GM10248 (cell line): ENCODE measurements at regions of chr19 and their contacts with region 1.

Region 1: DNA sequence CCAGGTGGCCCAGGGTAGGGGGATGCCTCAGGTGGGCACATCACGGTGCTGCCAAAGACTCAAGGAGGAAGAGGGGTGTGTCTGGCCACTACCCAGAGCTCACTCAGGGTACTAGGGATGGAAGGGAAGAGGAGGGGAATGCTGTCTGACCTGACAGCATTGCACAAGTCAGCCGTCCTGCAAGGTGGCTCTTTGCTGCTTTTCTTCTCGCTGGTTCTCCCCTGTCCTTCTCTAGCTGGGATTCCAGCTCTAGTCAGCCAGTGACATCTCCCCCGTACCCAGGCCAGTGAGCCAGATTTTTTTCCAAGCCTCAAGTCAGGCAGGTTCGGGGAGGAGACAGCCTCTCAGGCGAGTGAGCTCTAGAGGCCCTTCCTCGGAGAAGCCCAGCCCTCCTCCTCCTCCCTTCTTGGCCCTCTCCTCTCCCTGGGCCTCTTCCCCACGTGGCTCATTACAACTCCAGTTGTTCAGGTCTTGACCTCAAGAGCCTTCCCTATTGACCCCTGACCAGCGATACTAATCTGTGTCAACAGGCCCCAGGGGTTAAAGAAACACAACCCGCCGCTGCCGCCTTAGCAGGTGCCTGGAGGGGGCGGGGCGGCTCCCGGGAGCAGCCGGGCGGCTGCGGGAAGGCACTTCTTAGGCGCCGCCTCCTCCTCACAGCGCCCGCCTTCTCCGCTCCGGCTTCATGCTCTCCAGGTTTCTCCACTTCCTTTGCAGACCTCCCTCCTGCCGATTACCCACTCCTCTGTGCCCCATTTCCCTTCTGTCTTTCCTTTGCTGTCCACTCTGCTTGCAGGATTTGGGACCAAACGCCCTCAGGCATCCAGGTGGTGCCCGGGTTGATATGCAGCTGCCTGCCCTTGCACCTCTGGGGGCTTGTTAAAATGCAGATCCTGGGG is 51.1 kb downstream of the LYL1 start:
- DNase-seq: peak; percentile 40
- CTCF ChIP-seq: no peak

Region 2: GRCh38 chr19:12859546-12859945 is 192.0 kb before region 1 on chr19:
- CTCF ChIA-PET with region 1: no interaction called
- POLR2A ChIA-PET with region 1: no interaction called
- DNase-seq: no peak
- CTCF ChIP-seq: no peak

Region 3: DNA sequence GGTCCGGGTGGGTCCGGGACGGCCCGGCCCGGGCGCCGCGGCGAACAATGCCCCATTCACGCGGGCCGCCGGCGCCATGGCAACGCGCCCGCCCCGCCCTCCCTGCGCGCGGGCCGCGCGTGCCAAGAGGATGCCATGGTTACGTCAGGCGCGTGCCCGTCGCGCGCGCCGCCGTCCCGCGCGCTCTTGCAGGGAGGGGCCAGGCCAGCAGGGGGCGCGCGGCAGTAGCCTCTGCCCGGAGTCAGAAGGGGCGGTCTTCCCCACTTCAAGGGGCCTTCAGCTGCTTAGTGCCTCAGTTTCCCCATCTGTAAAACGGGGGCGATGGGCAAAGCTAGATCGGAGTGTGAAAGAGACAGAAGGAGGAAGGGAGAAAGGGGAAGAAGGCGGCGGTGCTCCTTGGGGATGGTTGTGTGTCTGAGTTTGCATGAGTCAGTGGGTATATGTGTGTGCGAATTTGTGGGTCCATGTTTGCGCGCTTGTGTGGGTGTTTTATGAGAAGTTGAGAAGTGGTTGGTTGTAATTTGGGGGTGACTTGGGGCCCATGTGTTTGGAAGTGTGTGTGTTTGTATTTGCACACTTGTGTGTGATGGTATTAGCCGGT is 67.9 kb before region 1 on chr19:
- CTCF ChIA-PET with region 1: interaction called, 270 read pairs
- POLR2A ChIA-PET with region 1: interaction called, 4 read pairs
- DNase-seq: peak; percentile 88
- CTCF ChIP-seq: peak; percentile 95

Region 4: DNA sequence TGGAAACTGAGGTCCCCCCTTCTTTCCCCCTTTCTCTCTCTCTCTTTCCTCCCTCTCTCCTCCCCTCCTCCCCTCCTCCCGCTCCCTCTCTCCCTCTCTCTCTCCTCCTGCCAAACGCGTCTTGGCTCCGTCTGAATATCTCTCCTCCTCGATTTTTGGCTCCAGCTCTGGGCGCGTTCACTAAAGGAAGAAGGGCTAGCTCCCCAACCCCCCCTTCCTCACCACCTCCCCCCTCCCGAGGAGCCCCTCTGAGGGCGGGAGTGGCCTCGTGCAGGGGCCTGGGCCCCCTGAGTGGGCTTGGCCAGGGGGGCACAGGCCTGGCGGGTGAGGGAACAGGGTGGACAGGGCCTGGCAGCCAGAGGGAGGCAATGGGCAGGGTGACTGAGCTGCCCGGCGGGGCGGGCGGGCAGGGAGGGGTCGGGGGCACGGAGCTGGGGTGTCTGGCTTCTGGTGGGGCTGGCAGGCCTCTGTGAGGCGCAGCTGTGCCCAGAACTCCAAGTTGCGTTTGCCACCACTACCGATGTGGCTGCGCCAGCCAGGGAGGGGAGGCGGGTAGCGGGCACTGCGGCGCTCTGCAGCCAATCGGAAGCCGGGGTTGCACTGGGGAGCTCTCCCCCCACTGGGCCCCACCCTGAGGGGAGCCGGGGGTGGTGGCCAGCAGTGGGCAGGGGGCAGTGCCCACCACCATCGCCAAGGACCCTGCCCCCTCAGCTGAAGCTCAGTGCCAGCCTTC is 49.2 kb before region 1 on chr19:
- CTCF ChIA-PET with region 1: no interaction called
- POLR2A ChIA-PET with region 1: no interaction called
- DNase-seq: no peak
- CTCF ChIP-seq: no peak

Region 5: DNA sequence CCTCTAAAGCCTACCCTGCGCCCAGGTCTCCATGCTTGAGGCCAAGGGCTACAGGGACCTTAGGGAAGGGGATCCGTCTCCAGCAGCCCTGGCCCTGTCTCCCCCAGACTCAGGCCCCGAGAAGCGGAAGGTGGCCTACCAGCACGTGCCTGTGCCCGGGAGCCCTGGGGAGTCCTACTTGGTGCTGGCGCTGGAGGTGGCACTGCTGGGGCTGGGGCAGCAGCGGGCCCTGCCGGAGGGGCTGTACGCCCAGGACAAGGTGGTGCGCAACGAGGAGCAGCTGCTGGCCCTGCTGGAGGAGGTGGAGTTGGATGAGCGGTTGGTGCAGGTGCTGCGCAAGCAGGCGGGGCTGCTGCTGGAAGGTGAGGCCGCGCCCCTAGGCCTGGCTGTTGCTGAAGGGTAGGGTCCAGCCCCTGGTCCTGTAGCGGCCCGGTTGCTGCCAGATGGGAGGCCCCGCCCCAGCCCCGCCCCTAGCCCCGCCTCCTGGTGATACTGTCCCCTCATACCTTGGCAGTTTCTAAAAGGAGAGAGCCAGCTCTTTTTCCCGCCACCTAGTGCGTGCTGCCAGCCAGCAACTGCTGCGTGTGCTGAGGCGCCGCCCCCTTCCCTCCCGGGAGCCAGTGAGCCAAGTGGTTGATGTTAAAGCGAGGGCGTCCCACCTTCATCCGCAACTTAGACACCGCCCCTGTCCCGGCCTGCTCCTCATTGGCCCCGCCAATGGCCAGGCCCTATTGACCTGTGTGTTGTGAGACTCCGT is 766.3 kb after region 1 on chr19:
- CTCF ChIA-PET with region 1: no interaction called
- POLR2A ChIA-PET with region 1: no interaction called
- DNase-seq: no peak
- CTCF ChIP-seq: no peak